Heart right ventricle (tissue), 16 donors: ENCODE measurements at regions of chr2 and their contacts with region 1.

Region 1: GRCh38 chr2:32743480-32744236 is 115.8 kb downstream of the TTC27 start:
- DNase-seq: no peak
- ATAC-seq: no peak
- H3K4me3 ChIP-seq: no peak overlapping the region
- H3K27ac ChIP-seq: no peak overlapping the region
- H3K4me1 ChIP-seq: peaks cover 0 to 42% (median 21%) of the 10 kb centered on the region in 9 donors
- H3K27me3 ChIP-seq: no peaks in the 10 kb centered on the region
- CTCF ChIP-seq: no peak

Region 2: GRCh38 chr2:32627814-32628579 is 115.7 kb before region 1 on chr2 and contains the start of gene TTC27:
- intact Hi-C with region 1: loop called in 1 of 10 experiments (anchors 10 kb)
- DNase-seq: peak; percentile 95 to 96
- ATAC-seq: peak; percentile 99 to 100 (median 100)
- H3K4me3 ChIP-seq: peak within 1 kb of the TSS; percentile 53 to 97 (median 88)
- H3K27ac ChIP-seq: peak within 1 kb of the TSS in 9 of 10 donors; percentile 69 to 78 (median 73)
- H3K4me1 ChIP-seq: peaks cover 0 to 25% (median 15%) of the 10 kb centered on the region in 9 donors
- H3K27me3 ChIP-seq: no peaks in the 10 kb centered on the region
- CTCF ChIP-seq: peak in 2 of 9 donors; percentile 4 to 12
- total RNA-seq, gene TTC27: 9.7 to 17.3 (median 12.5) TPM

Region 3: DNA sequence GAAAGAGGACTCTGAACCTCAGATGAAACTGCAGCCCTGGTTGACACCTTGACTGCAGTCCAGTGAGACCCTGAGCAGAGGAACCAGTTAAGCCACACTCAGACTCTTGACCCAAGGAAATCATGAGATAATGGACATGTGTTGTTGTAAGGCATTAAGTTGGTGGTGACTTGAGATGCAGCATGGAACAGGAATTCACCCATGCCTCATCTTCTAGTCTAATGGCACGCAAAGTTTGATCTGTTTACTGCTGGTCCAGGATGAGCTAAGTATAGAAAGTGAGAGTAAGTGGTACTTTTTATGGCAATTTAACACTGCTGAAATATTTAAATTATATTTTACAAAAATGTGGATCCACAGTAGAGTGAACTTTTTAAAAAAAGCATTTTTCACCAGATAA is 151.8 kb after region 1 on chr2:
- intact Hi-C with region 1: no loop called
- DNase-seq: no peak
- ATAC-seq: no peak
- H3K4me3 ChIP-seq: no peak overlapping the region
- H3K27ac ChIP-seq: no peak overlapping the region
- H3K4me1 ChIP-seq: peaks cover 0 to 5% (median 0%) of the 10 kb centered on the region in 9 donors
- H3K27me3 ChIP-seq: no peaks in the 10 kb centered on the region
- CTCF ChIP-seq: no peak

Region 4: GRCh38 chr2:33215299-33215698 is 471.6 kb after region 1 on chr2:
- intact Hi-C with region 1: no loop called
- DNase-seq: peak; percentile 25 to 63
- ATAC-seq: peak in 7 of 8 donors; percentile 2 to 41 (median 22)
- H3K4me3 ChIP-seq: no peak overlapping the region
- H3K27ac ChIP-seq: peak overlapping the region in 6 of 10 donors; percentile 11 to 71 (median 38)
- H3K4me1 ChIP-seq: peaks cover 12 to 80% (median 52%) of the 10 kb centered on the region in 9 donors
- H3K27me3 ChIP-seq: no peaks in the 10 kb centered on the region
- CTCF ChIP-seq: no peak